T-cell (primary cell): ENCODE measurements at regions of chr7 and their contacts with region 1.

Region 1: GRCh38 chr7:50335795-50336754 is 31.6 kb downstream of the IKZF1 start:
- DNase-seq: peak in 34 of 35 experiments; percentile 60 to 84 (median 73)
- ATAC-seq: peak; percentile 28 to 63 (median 58)
- H3K4me3 ChIP-seq: peak overlapping the region; percentile 16 to 45
- H3K4me3 Mint-ChIP-seq: no peak overlapping the region
- H3K27ac ChIP-seq: peak overlapping the region; percentile 88
- H3K27ac Mint-ChIP-seq: no peak overlapping the region
- H3K4me1 ChIP-seq: peaks cover 90 to 97% of the 10 kb centered on the region in 2 experiments
- H3K4me1 Mint-ChIP-seq: peaks cover 0 to 45% (median 0%) of the 10 kb centered on the region in 3 donors
- H3K27me3 ChIP-seq: no peaks in the 10 kb centered on the region
- H3K27me3 Mint-ChIP-seq: no peaks in the 10 kb centered on the region

Region 2: DNA sequence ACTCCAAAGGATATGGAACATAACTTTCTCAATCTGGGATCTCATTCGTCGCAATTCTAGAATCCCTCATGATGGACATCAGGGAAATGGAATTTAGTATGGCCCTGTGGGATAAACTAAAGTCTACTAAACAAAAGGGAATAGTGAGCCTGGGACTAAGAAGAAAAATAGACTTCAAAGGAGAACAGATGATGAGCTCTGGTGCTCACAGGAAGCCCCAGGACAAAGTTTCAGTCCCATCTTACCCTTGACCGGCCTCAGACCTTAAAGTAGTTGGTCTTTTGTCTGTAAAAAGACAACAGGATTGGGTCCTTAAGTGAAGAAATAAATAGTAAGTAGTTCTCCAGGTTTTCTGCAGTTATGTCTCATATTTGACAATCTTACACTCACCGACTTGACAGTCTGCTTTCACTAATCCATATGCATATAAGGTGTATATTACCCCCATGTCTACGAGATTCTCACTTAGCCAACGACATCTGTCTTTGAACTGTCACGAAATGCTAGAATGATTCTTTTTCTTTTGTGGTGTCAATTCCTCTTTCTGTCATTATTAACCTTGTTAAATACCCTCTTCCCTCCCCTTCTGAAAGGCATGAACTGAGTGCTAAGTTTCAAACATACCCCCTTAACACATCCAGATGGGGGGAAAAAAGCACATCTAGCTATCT is 42.4 kb before region 1 on chr7:
- CTCF ChIA-PET with region 1: no interaction called
- POLR2A ChIA-PET with region 1: no interaction called
- DNase-seq: no peak
- ATAC-seq: no peak
- H3K4me3 ChIP-seq: no peak overlapping the region
- H3K4me3 Mint-ChIP-seq: no peak overlapping the region
- H3K27ac ChIP-seq: no peak overlapping the region
- H3K27ac Mint-ChIP-seq: no peak overlapping the region
- H3K4me1 ChIP-seq: peaks cover 0 to 3% of the 10 kb centered on the region in 2 experiments
- H3K4me1 Mint-ChIP-seq: peaks cover 34 to 45% (median 38%) of the 10 kb centered on the region in 3 donors
- H3K27me3 ChIP-seq: no peaks in the 10 kb centered on the region
- H3K27me3 Mint-ChIP-seq: no peaks in the 10 kb centered on the region

Region 3: GRCh38 chr7:50304158-50304910 is 31.7 kb before region 1 on chr7 and contains the start of gene IKZF1:
- CTCF ChIA-PET with region 1: interaction called, 4 to 9 read pairs
- POLR2A ChIA-PET with region 1: interaction called, 5 to 11 read pairs
- DNase-seq: peak in 30 of 35 experiments; percentile 35 to 72 (median 50)
- ATAC-seq: peak; percentile 43 to 57 (median 52)
- H3K4me3 ChIP-seq: peak within 1 kb of the TSS; percentile 68 to 74
- H3K4me3 Mint-ChIP-seq: peak within 1 kb of the TSS; percentile 95 to 99 (median 98)
- H3K27ac ChIP-seq: peak within 1 kb of the TSS; percentile 87
- H3K27ac Mint-ChIP-seq: peak within 1 kb of the TSS; percentile 95 to 100
- H3K4me1 ChIP-seq: peaks cover 32 to 39% of the 10 kb centered on the region in 2 experiments
- H3K4me1 Mint-ChIP-seq: peaks cover 55 to 69% (median 57%) of the 10 kb centered on the region in 3 donors
- H3K27me3 ChIP-seq: no peaks in the 10 kb centered on the region
- H3K27me3 Mint-ChIP-seq: no peaks in the 10 kb centered on the region
- total RNA-seq, gene IKZF1: 429 to 525 (median 494) TPM

Region 4: DNA sequence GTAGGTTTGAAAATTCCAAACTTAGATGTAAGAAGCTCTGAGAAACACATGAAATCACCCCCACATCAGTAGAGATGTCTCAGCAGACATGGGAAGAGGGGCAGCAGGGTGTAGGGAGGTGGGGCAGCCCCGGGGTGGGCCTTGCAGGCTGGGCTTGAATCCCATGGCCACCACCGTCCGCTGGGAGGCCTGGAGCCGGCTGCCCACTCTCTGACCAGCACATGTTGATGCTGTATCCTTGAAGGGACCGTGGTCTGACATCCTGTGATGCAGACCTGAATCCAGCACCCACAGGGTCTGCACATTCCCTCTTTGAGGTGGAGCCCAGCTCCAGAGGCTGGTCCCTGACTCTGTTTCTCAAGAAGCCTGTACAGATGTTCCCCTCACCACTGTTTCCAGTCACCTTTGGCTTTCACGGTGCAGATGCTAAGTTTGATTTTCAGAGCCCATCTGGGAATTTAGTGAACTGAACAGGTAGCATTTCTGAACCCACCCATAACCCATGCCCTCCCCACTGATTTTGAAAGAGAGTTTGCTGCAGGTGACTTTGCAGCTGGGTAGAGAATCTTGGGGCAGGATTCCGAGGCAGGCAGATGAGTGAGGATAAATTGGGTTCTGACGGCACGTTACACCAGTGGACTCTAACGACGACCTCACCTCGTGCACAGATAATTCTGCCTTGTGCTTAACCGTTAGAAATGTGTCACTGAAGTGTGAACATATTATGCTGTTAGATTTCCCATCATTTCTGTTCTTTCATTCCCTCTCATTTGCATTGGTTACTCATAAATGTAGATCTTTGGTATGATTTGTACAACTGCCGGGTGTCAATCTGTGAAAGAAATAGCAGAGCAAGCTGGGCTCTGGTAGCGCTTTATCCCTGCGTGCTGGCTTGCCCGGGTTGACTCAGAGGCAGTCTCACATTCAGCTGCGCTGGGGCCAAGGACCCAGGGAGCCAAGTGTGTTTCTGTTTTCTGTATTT is 14.2 kb after region 1 on chr7:
- CTCF ChIA-PET with region 1: interaction called, 10 to 15 read pairs
- POLR2A ChIA-PET with region 1: interaction called, 9 to 15 read pairs
- DNase-seq: peak in 32 of 35 experiments; percentile 43 to 76 (median 60)
- ATAC-seq: peak; percentile 48 to 71 (median 70)
- H3K4me3 ChIP-seq: peak overlapping the region; percentile 11 to 20
- H3K4me3 Mint-ChIP-seq: peak overlapping the region; percentile 51 to 74 (median 67)
- H3K27ac ChIP-seq: peak overlapping the region; percentile 96
- H3K27ac Mint-ChIP-seq: peak overlapping the region; percentile 95 to 96
- H3K4me1 ChIP-seq: peaks cover 91% of the 10 kb centered on the region in 2 experiments
- H3K4me1 Mint-ChIP-seq: peaks cover 98 to 100% (median 99%) of the 10 kb centered on the region in 3 donors
- H3K27me3 ChIP-seq: no peaks in the 10 kb centered on the region
- H3K27me3 Mint-ChIP-seq: no peaks in the 10 kb centered on the region

Region 5: GRCh38 chr7:50359995-50360925 is 24.2 kb after region 1 on chr7:
- CTCF ChIA-PET with region 1: interaction called, 11 to 12 read pairs
- POLR2A ChIA-PET with region 1: interaction called, 12 to 22 read pairs
- DNase-seq: peak; percentile 57 to 95 (median 83)
- ATAC-seq: peak; percentile 85 to 92 (median 87)
- H3K4me3 ChIP-seq: peak overlapping the region in 1 of 2 donors; percentile 10
- H3K4me3 Mint-ChIP-seq: peak overlapping the region; percentile 63 to 73 (median 71)
- H3K27ac ChIP-seq: peak overlapping the region; percentile 96
- H3K27ac Mint-ChIP-seq: peak overlapping the region; percentile 99
- H3K4me1 ChIP-seq: peaks cover 92 to 95% of the 10 kb centered on the region in 2 experiments
- H3K4me1 Mint-ChIP-seq: peaks cover 98 to 99% (median 98%) of the 10 kb centered on the region in 3 donors
- H3K27me3 ChIP-seq: no peaks in the 10 kb centered on the region
- H3K27me3 Mint-ChIP-seq: no peaks in the 10 kb centered on the region